ENCODE measurements at regions of chr2 and their contacts with region 1.

Region 1: GRCh38 chr2:114543236-114543766 is 100.9 kb downstream of the DPP10 start:
- DNase-seq: peak; percentile 44
- H3K4me3 Mint-ChIP-seq: peak overlapping the region; percentile 56
- H3K27ac Mint-ChIP-seq: peak overlapping the region; percentile 77
- H3K4me1 Mint-ChIP-seq: peaks cover 51% of the 10 kb centered on the region
- H3K27me3 Mint-ChIP-seq: no peaks in the 10 kb centered on the region
- CTCF ChIP-seq: peak; percentile 41

Region 2: DNA sequence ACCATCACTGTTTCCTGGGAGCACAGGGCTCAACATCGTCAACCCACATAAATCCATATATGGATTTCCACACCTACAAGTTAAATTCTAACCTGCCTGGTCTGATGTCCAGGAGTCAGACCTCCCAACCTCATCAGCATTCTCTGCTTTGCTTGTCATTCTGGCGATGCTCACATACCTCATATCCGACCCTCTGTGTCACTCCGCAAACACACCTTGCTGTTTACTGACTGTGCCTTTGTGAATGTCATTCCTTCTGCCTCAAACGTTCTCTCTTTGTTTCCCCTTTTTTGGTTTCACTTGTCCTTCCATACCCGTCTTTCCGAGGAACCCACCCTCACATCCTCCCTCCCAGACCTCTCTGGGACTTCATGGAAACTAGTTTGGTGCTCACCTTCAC is 466.3 kb before region 1 on chr2:
- CTCF ChIA-PET with region 1: no interaction called
- intact Hi-C with region 1: loop called (anchors 10 kb)
- DNase-seq: peak; percentile 6
- H3K4me3 Mint-ChIP-seq: peak overlapping the region; percentile 23
- H3K27ac Mint-ChIP-seq: peak overlapping the region; percentile 6
- H3K4me1 Mint-ChIP-seq: peaks cover 15% of the 10 kb centered on the region
- H3K27me3 Mint-ChIP-seq: peaks cover 16% of the 10 kb centered on the region
- CTCF ChIP-seq: no peak

Region 3: GRCh38 chr2:114219456-114220014 is 323.8 kb before region 1 on chr2:
- CTCF ChIA-PET with region 1: no interaction called
- intact Hi-C with region 1: loop called (anchors 10 kb)
- DNase-seq: no peak
- H3K4me3 Mint-ChIP-seq: no peak overlapping the region
- H3K27ac Mint-ChIP-seq: no peak overlapping the region
- H3K4me1 Mint-ChIP-seq: peaks cover 20% of the 10 kb centered on the region
- H3K27me3 Mint-ChIP-seq: no peaks in the 10 kb centered on the region
- CTCF ChIP-seq: no peak

Region 4: DNA sequence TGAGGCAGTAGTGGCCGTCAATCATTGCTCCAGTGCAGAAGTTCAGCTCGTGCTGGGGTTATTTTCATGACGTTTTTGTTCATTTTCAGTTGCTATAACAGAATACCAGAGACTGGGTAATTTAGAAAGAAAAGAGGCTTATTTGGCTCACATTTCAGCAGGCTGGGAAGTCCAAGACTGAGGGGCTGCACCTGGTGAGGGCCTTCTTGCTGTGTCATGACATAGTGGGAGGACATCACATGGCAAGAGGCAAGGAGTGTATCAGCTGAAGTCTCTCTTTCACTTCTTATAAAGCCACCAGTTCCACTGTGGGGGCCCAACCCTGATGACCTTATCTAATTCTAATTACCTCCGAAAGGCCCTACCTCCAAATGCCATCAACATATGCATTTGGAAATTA is 158.9 kb before region 1 on chr2:
- CTCF ChIA-PET with region 1: no interaction called
- intact Hi-C with region 1: no loop called
- DNase-seq: no peak
- H3K4me3 Mint-ChIP-seq: no peak overlapping the region
- H3K27ac Mint-ChIP-seq: no peak overlapping the region
- H3K4me1 Mint-ChIP-seq: no peaks in the 10 kb centered on the region
- H3K27me3 Mint-ChIP-seq: no peaks in the 10 kb centered on the region
- CTCF ChIP-seq: no peak

Region 5: GRCh38 chr2:114421781-114422180 is 121.5 kb before region 1 on chr2:
- CTCF ChIA-PET with region 1: no interaction called
- intact Hi-C with region 1: loop called (anchors 10 kb)
- DNase-seq: no peak
- H3K4me3 Mint-ChIP-seq: no peak overlapping the region
- H3K27ac Mint-ChIP-seq: no peak overlapping the region
- H3K4me1 Mint-ChIP-seq: no peaks in the 10 kb centered on the region
- H3K27me3 Mint-ChIP-seq: no peaks in the 10 kb centered on the region
- CTCF ChIP-seq: no peak

Measured in Calu3 (cell line).